Left ventricle myocardium superior (tissue), 1 donor: ENCODE measurements at regions of chr17 and their contacts with region 1.

Region 1: DNA sequence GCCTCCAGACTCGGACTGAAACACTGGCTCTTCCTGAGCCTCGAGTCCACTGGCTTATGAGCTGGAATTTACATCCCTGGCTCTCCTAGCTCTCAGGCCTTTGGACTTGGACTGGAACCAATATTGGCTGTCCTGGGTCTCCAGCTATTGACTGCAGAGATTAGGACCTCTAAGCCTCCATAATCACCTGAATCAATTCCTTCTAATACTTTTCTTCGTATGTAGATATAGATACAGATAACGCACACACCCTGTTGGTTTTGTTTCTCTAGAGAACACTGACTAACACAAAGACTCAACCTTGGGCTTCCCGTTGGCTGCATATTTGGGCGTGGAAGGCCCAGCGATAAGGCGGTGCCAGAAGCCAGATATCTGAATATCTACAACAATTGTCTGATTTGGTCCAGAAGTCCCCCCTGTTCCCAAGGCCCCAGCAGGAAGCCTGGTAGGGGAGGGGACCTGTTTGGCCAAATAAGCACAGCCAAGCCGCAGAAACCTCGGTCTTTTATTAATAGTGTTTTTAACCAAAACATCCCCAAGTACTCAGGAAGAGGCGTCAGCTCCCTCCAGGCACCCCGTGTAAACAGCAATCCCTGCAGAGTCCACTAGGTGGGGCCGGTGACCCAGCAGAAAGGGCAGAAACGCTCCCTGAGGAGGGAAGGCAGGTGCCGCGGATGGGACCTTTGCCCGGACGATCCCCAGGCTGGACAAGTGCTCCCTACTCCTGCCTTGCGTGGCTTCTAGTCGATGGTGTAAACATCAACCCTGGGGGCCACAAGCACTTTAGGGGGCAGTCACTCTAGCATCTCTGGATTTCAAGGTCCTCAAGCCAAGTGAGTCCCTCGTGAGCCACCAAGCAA is 57.0 kb downstream of the ABR start:
- DNase-seq: peak; percentile 89
- ATAC-seq: peak; percentile 88

Region 2: GRCh38 chr17:1055751-1056645 is 66.8 kb before region 1 on chr17:
- intact Hi-C with region 1: no loop called
- DNase-seq: peak; percentile 75
- ATAC-seq: peak; percentile 76

Region 3: GRCh38 chr17:1186923-1187771 is 64.4 kb after region 1 on chr17:
- intact Hi-C with region 1: loop called (anchors 5 kb)
- DNase-seq: peak; percentile 92
- ATAC-seq: peak; percentile 90

Region 4: GRCh38 chr17:1275962-1276736 is 153.4 kb after region 1 on chr17:
- intact Hi-C with region 1: no loop called
- DNase-seq: peak; percentile 84
- ATAC-seq: peak; percentile 80